CD14-positive monocyte (primary cell): ENCODE measurements at regions of chr7 and their contacts with region 1.

Region 1: DNA sequence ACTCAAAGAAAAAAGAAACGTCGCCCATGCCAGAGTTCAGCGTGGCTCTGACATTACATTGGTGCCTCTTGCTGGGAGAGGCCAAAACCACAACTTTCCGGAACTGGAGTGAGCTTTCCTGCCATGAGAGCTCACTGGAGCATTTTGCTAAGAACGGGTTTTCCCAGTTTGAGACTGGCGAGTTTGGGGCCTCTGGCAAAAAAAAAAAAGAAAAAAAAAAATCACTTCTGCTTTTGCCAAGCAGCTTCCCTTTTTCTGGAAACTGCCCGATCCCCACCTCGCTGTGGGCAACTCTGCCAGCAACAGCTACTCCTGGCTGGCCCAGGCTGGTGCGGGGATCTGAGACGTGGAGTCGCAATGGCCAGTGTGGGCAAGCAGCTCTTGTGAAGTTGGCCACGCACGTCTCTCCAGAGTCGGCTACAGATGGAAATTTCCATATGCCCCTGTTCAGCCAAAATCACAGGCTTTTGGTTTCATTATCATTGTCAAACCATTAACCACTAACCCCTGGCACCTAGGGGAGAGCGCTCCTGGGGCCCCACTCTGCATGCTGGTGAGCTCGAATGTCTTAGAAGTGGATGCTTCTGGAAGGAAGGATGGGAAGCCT is 25.7 kb downstream of the PRKAG2 start:
- DNase-seq: peak; percentile 90 to 98 (median 98)
- H3K4me3 ChIP-seq: peak overlapping the region; percentile 21 to 66 (median 30)
- H3K4me3 Mint-ChIP-seq: peak overlapping the region; percentile 69 to 85
- H3K27ac ChIP-seq: peak overlapping the region; percentile 97 to 98
- H3K27ac Mint-ChIP-seq: peak overlapping the region; percentile 98 to 100 (median 100)
- H3K4me1 ChIP-seq: peaks cover 69 to 74% of the 10 kb centered on the region in 2 donors
- H3K4me1 Mint-ChIP-seq: peaks cover 73% of the 10 kb centered on the region
- H3K27me3 ChIP-seq: no peaks in the 10 kb centered on the region
- H3K27me3 Mint-ChIP-seq: peaks cover 0 to 3% (median 1%) of the 10 kb centered on the region in 3 donors
- CTCF ChIP-seq: no peak

Region 2: GRCh38 chr7:151623766-151624165 is 227.5 kb before region 1 on chr7:
- intact Hi-C with region 1: no loop called
- DNase-seq: no peak
- H3K4me3 ChIP-seq: no peak overlapping the region
- H3K4me3 Mint-ChIP-seq: no peak overlapping the region
- H3K27ac ChIP-seq: no peak overlapping the region
- H3K27ac Mint-ChIP-seq: no peak overlapping the region
- H3K4me1 ChIP-seq: no peaks in the 10 kb centered on the region
- H3K4me1 Mint-ChIP-seq: peaks cover 5% of the 10 kb centered on the region
- H3K27me3 ChIP-seq: no peaks in the 10 kb centered on the region
- H3K27me3 Mint-ChIP-seq: peaks cover 0 to 2% (median 0%) of the 10 kb centered on the region in 3 donors
- CTCF ChIP-seq: no peak

Region 3: GRCh38 chr7:151863386-151864079 is 12.3 kb after region 1 on chr7:
- intact Hi-C with region 1: loop called in 1 of 2 experiments (anchors 1 kb)
- DNase-seq: peak; percentile 14 to 33 (median 20)
- H3K4me3 ChIP-seq: no peak overlapping the region
- H3K4me3 Mint-ChIP-seq: no peak overlapping the region
- H3K27ac ChIP-seq: peak overlapping the region in 1 of 2 donors; percentile 29
- H3K27ac Mint-ChIP-seq: peak overlapping the region in 5 of 7 donors; percentile 21 to 79 (median 53)
- H3K4me1 ChIP-seq: peaks cover 24 to 28% of the 10 kb centered on the region in 2 donors
- H3K4me1 Mint-ChIP-seq: peaks cover 36% of the 10 kb centered on the region
- H3K27me3 ChIP-seq: no peaks in the 10 kb centered on the region
- H3K27me3 Mint-ChIP-seq: no peaks in the 10 kb centered on the region
- CTCF ChIP-seq: no peak

Region 4: GRCh38 chr7:151925446-151926335 is 74.4 kb after region 1 on chr7:
- intact Hi-C with region 1: loop called in 1 of 2 experiments (anchors 5 kb)
- DNase-seq: peak; percentile 78 to 86 (median 85)
- H3K4me3 ChIP-seq: peak overlapping the region in 1 of 3 experiments; percentile 46
- H3K4me3 Mint-ChIP-seq: peak overlapping the region; percentile 45 to 78
- H3K27ac ChIP-seq: peak overlapping the region; percentile 99 to 100
- H3K27ac Mint-ChIP-seq: peak overlapping the region; percentile 98 to 100 (median 100)
- H3K4me1 ChIP-seq: peaks cover 69 to 70% of the 10 kb centered on the region in 2 donors
- H3K4me1 Mint-ChIP-seq: peaks cover 65% of the 10 kb centered on the region
- H3K27me3 ChIP-seq: no peaks in the 10 kb centered on the region
- H3K27me3 Mint-ChIP-seq: peaks cover 0 to 2% (median 0%) of the 10 kb centered on the region in 3 donors
- CTCF ChIP-seq: no peak

Region 5: GRCh38 chr7:152231089-152231488 is 379.8 kb after region 1 on chr7:
- intact Hi-C with region 1: no loop called
- DNase-seq: no peak
- H3K4me3 ChIP-seq: no peak overlapping the region
- H3K4me3 Mint-ChIP-seq: no peak overlapping the region
- H3K27ac ChIP-seq: no peak overlapping the region
- H3K27ac Mint-ChIP-seq: no peak overlapping the region
- H3K4me1 ChIP-seq: no peaks in the 10 kb centered on the region
- H3K4me1 Mint-ChIP-seq: no peaks in the 10 kb centered on the region
- H3K27me3 ChIP-seq: no peaks in the 10 kb centered on the region
- H3K27me3 Mint-ChIP-seq: no peaks in the 10 kb centered on the region
- CTCF ChIP-seq: no peak